A549 (cell line): ENCODE measurements at regions of chr7 and their contacts with region 1.

Region 1: GRCh38 chr7:101602484-101603241 is 26.4 kb downstream of the MYL10 start:
- DNase-seq: peak; percentile 72 to 78
- ATAC-seq: peak; percentile 95 to 99
- H3K4me3 ChIP-seq: no peak overlapping the region
- H3K27ac ChIP-seq: peak overlapping the region; percentile 57 to 81; a peak in 4 of 6 replicates
- H3K4me1 ChIP-seq: peaks cover 6% of the 10 kb centered on the region
- CTCF ChIP-seq: peak; percentile 95
- EP300 ChIP-seq: no peak
- POLR2A ChIP-seq: no peak
- RAD21 ChIP-seq: peak; percentile 94 to 95

Region 2: GRCh38 chr7:101035941-101036340 is 566.7 kb before region 1 on chr7:
- CTCF ChIA-PET with region 1: no interaction called
- POLR2A ChIA-PET with region 1: no interaction called
- DNase-seq: no peak
- ATAC-seq: no peak
- H3K4me3 ChIP-seq: no peak overlapping the region
- H3K27ac ChIP-seq: no peak overlapping the region
- H3K4me1 ChIP-seq: no peaks in the 10 kb centered on the region
- CTCF ChIP-seq: no peak
- EP300 ChIP-seq: no peak
- POLR2A ChIP-seq: no peak
- RAD21 ChIP-seq: no peak

Region 3: DNA sequence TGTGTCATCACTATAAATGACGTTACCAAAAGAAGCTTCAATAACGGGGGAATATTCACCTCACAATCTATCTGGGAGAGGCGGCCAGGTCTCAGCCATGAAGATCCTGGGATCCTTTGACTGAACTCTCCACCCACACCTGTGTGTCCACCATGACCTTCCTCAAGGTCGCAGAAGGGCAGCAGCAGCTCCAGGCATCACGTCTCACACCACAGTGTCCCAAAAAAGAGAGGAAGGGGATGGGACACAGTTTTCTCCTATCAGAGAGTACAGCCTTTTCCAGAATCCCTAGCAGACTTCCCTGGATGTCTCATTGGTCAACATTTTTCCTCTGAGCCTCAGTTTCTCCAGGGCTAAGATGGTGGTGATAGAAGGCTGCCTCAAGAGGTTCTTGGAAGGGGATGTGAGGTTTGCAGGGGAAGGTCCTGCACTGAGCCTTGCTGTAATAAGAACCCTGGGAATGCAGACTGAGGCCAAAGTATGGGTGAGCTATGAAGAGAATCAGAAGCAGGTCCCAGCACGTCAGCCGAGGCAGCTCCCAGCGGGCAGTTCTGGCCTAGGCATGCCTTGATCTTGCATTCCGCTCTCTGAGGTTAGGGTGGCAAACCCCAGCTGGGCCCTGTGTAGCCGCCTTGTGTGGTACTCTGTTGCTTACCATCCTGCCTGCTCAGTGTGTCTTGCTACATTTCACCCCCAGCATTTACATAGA is 176.2 kb before region 1 on chr7:
- CTCF ChIA-PET with region 1: no interaction called
- POLR2A ChIA-PET with region 1: no interaction called
- DNase-seq: no peak
- ATAC-seq: no peak
- H3K4me3 ChIP-seq: no peak overlapping the region
- H3K27ac ChIP-seq: no peak overlapping the region
- H3K4me1 ChIP-seq: no peaks in the 10 kb centered on the region
- CTCF ChIP-seq: no peak
- EP300 ChIP-seq: no peak
- POLR2A ChIP-seq: no peak
- RAD21 ChIP-seq: no peak

Region 4: DNA sequence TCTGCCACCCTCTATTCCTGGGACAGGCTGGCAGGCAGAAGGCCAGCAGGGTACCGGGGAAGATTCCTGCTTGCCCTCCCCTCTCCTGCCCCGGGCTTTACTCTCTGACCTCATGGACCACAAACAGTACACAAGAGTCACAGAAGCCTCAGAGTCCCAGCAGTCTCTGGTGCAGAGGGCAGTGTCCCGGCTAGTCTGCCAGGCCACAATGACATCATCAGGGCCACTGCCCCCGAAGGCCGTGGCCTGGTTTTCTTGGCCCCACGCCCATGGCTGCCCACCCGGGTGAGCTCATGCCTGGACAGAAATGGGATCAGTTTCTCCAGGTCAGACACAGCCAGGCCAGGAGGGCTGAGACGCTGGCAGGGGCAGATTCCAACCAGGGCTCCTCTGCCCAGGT is 65.5 kb before region 1 on chr7:
- CTCF ChIA-PET with region 1: interaction called, 10 read pairs
- POLR2A ChIA-PET with region 1: no interaction called
- DNase-seq: no peak
- ATAC-seq: no peak
- H3K4me3 ChIP-seq: no peak overlapping the region
- H3K27ac ChIP-seq: no peak overlapping the region
- H3K4me1 ChIP-seq: no peaks in the 10 kb centered on the region
- CTCF ChIP-seq: no peak
- EP300 ChIP-seq: no peak
- POLR2A ChIP-seq: no peak
- RAD21 ChIP-seq: no peak

Region 5: DNA sequence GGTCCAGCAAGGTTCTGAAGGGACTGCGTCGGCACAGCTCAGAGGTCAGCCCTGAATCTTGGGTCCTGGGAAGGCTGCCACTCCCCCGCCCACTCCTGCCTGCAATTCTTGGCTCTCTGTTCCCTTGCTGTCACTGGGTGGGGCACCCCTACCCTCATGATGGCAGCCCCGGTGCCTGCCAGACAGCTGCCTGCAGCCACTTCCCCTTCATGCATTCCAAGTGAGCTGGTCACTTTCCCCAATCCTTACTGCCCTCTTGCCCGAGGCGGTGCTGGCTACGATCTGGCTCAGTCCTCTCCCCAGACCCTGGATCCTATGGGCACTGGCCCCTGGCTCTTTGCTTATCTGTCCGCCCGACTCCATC is 12.3 kb after region 1 on chr7:
- CTCF ChIA-PET with region 1: interaction called, 37 read pairs
- POLR2A ChIA-PET with region 1: no interaction called
- DNase-seq: no peak
- ATAC-seq: peak in 1 of 2 experiments; percentile 20; a peak in 3 of 6 replicates
- H3K4me3 ChIP-seq: no peak overlapping the region
- H3K27ac ChIP-seq: 0 out of 6 replicates have a peak overlapping the region, but pooled peaks of 1 of the 2 experiments have one; percentile 31
- H3K4me1 ChIP-seq: 0 out of 3 replicates have a peak, but pooled peaks cover 5% of the 10 kb centered on the region
- CTCF ChIP-seq: no peak
- EP300 ChIP-seq: no peak
- POLR2A ChIP-seq: no peak
- RAD21 ChIP-seq: no peak

Region 6: GRCh38 chr7:101815835-101816493 is 213.3 kb after region 1 on chr7:
- CTCF ChIA-PET with region 1: interaction called, 10 read pairs
- POLR2A ChIA-PET with region 1: no interaction called
- DNase-seq: peak; percentile 72 to 84
- ATAC-seq: peak; percentile 69 to 75
- H3K4me3 ChIP-seq: peak overlapping the region; percentile 92
- H3K27ac ChIP-seq: peak overlapping the region; percentile 99 to 100
- H3K4me1 ChIP-seq: peaks cover 37% of the 10 kb centered on the region; the same call in 2 of the 3 replicates
- CTCF ChIP-seq: peak; percentile 52
- EP300 ChIP-seq: no peak
- POLR2A ChIP-seq: peak; percentile 12; the same call in 1 of the 2 replicates
- RAD21 ChIP-seq: no peak

Region 7: DNA sequence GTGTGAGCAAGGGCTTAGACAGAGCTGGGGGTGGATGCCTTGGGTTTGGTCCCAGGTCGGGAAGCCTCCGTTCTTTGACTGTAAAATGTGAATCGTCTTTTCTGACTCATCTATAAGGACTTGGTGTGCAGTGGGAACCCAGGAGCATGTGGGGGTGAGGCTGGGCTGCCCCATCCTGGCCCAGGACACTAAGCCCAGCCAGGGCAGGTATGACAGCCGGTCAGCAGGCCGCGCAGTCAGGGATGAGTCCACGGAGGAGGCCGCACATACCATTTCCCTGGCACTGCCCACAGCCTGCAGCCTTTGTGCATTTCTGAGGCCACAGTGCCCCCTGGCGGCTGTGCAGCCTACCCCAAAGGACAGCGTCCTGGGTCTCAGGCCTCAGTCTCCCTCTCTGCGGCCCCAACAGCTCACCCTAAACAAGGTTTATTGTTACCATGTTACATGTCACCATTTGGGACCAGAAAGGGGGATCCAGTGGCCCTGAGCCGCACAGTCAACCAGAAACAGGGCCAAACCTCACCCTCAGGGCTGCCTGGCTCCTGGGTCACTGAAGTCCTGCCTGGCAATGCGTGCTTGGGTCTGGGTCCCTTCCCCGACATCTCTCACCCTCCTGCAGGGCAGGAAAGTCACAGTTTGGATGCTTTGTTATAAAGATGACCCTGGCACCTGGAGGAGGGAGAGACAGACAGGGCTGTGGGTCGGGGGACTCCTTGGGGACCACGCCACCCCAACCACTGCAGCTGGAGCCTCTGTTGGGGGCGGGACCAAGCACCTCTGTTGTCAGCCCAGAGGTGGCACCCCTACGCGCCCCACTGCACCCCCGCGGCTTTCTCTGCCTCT is 669.6 kb after region 1 on chr7:
- CTCF ChIA-PET with region 1: interaction called, 32 read pairs
- POLR2A ChIA-PET with region 1: no interaction called
- DNase-seq: peak; percentile 81 to 91
- ATAC-seq: peak; percentile 70 to 90
- H3K4me3 ChIP-seq: no peak overlapping the region
- H3K27ac ChIP-seq: peak overlapping the region; percentile 3 to 83; a peak in 4 of 6 replicates
- H3K4me1 ChIP-seq: peaks cover 29% of the 10 kb centered on the region
- CTCF ChIP-seq: peak; percentile 95
- EP300 ChIP-seq: no peak
- POLR2A ChIP-seq: no peak
- RAD21 ChIP-seq: peak; percentile 98